CD4-positive, alpha-beta T cell (primary cell): ENCODE measurements at regions of chr1 and their contacts with region 1.

Region 1: DNA sequence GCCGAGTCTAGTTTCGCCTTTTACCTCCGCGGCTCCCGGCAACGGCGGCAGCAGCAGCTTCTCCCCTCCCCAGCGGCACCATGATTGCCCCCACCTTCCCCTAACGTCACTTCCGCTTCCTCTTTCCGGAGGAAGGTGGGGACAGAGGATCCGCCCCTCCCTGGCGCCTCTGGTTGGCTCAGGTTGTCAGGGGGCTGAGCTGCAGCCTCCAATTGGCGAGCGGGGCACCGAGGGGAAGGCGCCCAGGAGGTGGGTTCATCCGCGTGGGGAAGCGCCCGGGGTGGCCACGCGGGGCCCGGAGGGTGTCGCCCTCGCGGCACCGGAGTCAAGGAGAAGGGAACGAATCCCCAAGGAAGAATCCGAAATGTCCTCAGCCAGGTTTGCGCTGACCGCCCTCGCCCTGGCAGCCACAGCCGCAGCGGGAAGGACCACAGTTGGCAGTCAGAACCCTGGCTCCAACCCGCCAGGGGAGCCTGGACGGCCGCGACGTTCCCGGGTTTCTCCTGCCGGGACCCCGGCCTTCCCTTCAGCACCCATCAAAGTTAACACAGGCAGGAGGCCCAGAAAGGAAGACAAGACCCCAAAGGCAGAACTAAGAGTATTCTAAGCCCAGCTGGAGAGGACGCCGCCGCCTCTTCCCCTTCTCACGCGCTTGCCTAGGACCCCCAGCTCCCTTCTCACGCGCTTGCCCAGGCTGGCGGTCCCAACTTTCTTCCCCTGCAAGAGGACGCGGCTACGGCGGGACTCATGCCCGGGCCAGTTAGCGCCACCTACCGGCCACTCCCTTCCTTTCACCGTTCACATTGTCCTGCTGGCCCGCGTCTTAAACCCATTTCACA is at the start of gene MTF1:
- DNase-seq: peak; percentile 91 to 99 (median 95)
- ATAC-seq: peak; percentile 98
- H3K4me3 ChIP-seq: peak within 1 kb of the TSS; percentile 88
- H3K4me3 Mint-ChIP-seq: peak within 1 kb of the TSS; percentile 98
- H3K27ac ChIP-seq: peak within 1 kb of the TSS; percentile 81 to 91
- H3K27ac Mint-ChIP-seq: peak within 1 kb of the TSS; percentile 87
- H3K4me1 ChIP-seq: peaks cover 18% of the 10 kb centered on the region
- H3K4me1 Mint-ChIP-seq: peaks cover 41% of the 10 kb centered on the region
- H3K27me3 ChIP-seq: no peaks in the 10 kb centered on the region
- H3K27me3 Mint-ChIP-seq: no peaks in the 10 kb centered on the region
- CTCF ChIP-seq: peak; percentile 91
- total RNA-seq, gene MTF1: 28.1 to 31.2 TPM

Region 2: GRCh38 chr1:37931361-37932158 is 71.8 kb after region 1 on chr1:
- CTCF ChIA-PET with region 1: interaction called, 3 read pairs
- POLR2A ChIA-PET with region 1: interaction called, 14 read pairs
- intact Hi-C with region 1: loop called in 1 of 2 experiments (anchors 2 kb)
- DNase-seq: peak; percentile 90 to 99 (median 97)
- ATAC-seq: peak; percentile 99
- H3K4me3 ChIP-seq: peak overlapping the region; percentile 93
- H3K4me3 Mint-ChIP-seq: peak overlapping the region; percentile 97
- H3K27ac ChIP-seq: peak overlapping the region; percentile 15 to 46
- H3K27ac Mint-ChIP-seq: peak overlapping the region; percentile 77
- H3K4me1 ChIP-seq: peaks cover 32% of the 10 kb centered on the region
- H3K4me1 Mint-ChIP-seq: peaks cover 38% of the 10 kb centered on the region
- H3K27me3 ChIP-seq: no peaks in the 10 kb centered on the region
- H3K27me3 Mint-ChIP-seq: no peaks in the 10 kb centered on the region
- CTCF ChIP-seq: no peak